Activated T-helper 1 cell treated with anti-CD3 and anti-CD28 coated beads, Interleukin-12 subunit alpha, Interleukin-12 subunit beta, Interleukin-2, Interleukin-4 antibody, amounts not matched to agents 30 ng/mL and 10 ng/mL and 1 ng/mL, durations not matched to agents 14 hours and 24 hours and 36 hours (primary cell): ENCODE measurements at regions of chr17 and their contacts with region 1.

Region 1: DNA sequence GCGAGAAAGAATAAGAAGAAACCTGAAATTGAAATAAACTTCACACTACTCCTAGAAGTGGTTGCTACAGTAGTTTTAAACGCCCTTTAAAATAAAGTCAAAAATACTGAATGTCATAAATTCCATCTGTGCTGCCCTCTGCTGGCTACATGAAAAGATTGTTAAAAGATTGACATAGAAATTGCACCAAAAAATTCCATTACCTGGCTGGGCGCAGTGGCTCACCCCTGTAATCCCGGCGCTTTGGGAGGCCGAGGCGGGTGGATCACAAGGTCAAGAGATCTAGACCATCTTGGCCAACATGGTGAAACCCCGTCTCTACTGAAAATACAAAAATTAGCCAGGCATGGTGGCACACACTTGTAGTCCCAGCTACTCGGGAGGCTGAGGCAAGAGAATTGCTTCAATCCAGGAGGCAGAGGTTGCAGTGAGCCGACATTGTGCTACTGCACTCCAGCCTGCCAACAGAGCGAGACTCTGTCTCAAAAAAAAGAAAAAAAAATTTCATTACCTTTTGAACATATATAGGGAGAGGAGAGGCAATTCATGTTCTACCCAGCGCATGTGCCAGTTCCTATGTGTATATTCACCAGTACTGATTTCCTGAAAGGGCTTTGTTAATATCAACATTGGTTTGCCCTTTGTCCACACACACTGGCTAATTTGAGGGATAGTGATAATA is 36.5 kb downstream of the CYTH1 start:
- DNase-seq: no peak
- H3K4me3 Mint-ChIP-seq: peak overlapping the region; percentile 53
- H3K27ac Mint-ChIP-seq: peak overlapping the region; percentile 75
- H3K4me1 Mint-ChIP-seq: peaks cover 85% of the 10 kb centered on the region
- H3K27me3 Mint-ChIP-seq: no peaks in the 10 kb centered on the region

Region 2: DNA sequence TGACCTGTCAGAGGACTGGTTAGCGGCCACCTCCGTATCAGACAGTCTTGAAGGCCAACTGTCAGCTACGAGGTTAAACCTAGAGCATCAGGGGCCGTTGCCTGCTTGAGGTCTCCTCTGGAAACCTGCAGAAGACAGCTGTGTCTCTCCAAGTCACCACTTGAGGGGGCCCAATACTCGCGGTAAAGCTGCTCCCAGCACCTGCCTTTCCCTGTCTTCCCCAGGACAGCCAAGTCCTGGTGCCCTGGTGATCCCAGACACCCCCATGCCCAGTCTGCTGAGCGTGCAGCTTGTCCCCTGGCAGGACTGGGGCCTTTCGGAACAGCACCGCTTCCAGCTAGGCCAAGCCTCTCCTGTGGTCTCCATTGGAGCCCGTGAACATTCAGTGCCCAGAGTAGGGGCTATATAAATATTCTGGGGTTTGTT is 248.4 kb before region 1 on chr17:
- intact Hi-C with region 1: loop called (anchors 1 kb)
- DNase-seq: peak; percentile 30
- H3K4me3 Mint-ChIP-seq: no peak overlapping the region
- H3K27ac Mint-ChIP-seq: no peak overlapping the region
- H3K4me1 Mint-ChIP-seq: no peaks in the 10 kb centered on the region
- H3K27me3 Mint-ChIP-seq: peaks cover 2% of the 10 kb centered on the region

Region 3: DNA sequence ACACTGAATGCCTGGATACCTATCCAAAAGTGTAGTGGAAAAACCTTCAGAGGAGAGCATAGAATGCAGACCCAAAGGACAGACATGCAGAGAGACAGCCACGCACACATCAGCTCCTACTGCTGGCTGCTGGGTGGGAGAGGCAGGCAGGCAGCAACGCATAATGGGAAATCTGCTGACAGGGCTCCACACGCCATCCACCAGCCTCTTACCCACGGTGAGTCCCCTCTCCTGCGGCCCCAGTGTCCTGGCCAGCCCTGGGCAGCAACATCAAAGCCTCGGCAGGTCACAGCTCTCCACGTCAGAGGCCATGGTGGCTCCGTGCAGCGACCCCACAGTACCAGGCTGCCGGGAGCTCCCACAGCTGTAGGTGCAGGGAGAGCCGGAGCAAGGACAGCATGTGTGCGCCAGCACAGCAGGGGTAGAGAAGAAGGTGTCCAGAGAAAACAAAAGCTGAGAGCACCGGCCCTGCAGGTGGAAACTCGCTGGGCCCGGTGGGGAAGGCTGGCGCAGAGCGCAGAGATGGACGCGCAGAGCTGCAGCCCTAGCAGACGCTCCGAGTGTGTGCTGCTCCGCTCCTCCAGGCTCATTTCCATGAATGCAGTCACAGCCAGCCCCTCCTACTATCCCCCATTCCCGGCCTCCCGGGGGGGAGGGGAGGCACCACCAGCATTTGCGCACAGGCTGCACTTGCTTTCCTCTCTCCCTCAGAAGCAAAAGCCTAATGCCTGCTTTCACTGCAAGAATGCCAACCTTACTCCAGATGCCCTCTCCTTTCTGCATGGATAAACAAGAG is 22.3 kb before region 1 on chr17:
- intact Hi-C with region 1: loop called (anchors 1 kb)
- DNase-seq: no peak
- H3K4me3 Mint-ChIP-seq: no peak overlapping the region
- H3K27ac Mint-ChIP-seq: peak overlapping the region; percentile 45
- H3K4me1 Mint-ChIP-seq: peaks cover 75% of the 10 kb centered on the region
- H3K27me3 Mint-ChIP-seq: no peaks in the 10 kb centered on the region

Region 4: DNA sequence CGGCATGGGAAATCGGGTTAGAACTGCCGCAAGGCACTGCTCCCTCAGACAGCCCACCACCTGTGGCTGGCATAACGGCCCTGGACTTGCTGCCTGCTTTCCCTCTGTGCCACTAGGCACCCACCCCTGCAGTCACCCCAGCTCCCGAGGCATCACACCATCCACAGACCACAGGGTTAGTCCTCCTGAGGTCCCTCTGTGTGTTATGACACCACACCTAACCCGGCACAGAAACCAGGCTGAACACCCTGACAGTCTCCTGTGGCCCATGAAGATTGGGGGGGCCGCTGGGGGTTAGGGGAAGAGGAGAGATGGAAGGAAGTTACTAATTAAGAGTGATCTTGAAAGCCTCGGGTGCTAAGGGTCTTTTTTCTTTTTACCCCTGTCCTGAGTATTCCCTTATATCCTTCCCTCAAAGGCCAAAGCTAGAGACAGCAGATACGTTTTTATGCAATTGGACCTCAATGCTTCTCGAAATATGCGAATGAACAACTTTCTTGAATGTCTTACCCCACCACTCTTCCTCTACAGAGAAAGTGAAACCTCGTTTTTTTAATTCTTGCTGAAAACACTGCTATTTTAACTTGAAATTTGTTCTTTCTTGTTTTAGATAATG is 29.5 kb after region 1 on chr17:
- intact Hi-C with region 1: loop called (anchors 1 kb)
- DNase-seq: peak; percentile 66
- H3K4me3 Mint-ChIP-seq: peak overlapping the region; percentile 90
- H3K27ac Mint-ChIP-seq: peak overlapping the region; percentile 99
- H3K4me1 Mint-ChIP-seq: peaks cover 68% of the 10 kb centered on the region
- H3K27me3 Mint-ChIP-seq: no peaks in the 10 kb centered on the region

Region 5: DNA sequence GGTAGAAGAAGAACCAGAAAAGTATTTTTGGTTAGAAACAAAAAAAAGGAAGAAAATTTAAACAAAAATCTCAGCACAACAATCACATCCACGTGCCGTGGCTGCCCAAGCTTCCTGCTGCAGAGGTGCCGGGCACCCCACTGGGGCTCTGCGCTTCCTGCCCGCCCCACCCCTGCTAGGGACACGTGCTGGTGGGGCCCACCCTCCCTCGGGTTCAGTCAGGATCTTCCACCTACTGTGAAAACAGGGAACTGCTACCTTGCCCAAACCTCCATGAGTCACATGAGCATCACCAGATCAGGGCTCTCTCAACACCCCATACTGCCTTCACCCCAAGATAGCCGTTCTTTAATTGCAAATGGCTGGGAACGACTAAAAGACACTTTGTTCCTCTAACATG is 60.9 kb after region 1 on chr17:
- intact Hi-C with region 1: loop called (anchors 2 kb)
- DNase-seq: no peak
- H3K4me3 Mint-ChIP-seq: peak overlapping the region; percentile 2
- H3K27ac Mint-ChIP-seq: peak overlapping the region; percentile 79
- H3K4me1 Mint-ChIP-seq: peaks cover 41% of the 10 kb centered on the region
- H3K27me3 Mint-ChIP-seq: no peaks in the 10 kb centered on the region

Region 6: DNA sequence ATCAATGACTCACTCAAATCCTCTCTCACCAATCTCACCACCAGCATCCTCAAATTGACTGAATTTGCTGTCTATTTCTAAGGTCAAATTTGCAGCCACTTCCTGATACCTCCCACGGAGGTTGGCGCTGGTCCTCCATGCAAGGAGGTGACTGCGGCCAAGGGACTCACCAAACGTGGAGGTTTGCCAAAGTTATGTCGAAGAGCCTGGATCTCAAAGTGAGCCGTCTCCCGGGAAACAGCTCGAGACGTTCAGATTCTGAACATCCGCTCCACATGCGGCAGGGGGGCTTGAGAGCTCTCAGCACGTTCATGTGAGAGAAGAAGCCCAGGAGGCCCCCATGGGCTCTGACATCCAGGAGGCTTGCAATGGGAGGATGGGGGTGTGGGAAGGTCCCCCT is 211.6 kb after region 1 on chr17:
- intact Hi-C with region 1: no loop called
- DNase-seq: no peak
- H3K4me3 Mint-ChIP-seq: no peak overlapping the region
- H3K27ac Mint-ChIP-seq: no peak overlapping the region
- H3K4me1 Mint-ChIP-seq: no peaks in the 10 kb centered on the region
- H3K27me3 Mint-ChIP-seq: peaks cover 2% of the 10 kb centered on the region